H1 (cell line): ENCODE measurements at regions of chr2 and their contacts with region 1.

Region 1: DNA sequence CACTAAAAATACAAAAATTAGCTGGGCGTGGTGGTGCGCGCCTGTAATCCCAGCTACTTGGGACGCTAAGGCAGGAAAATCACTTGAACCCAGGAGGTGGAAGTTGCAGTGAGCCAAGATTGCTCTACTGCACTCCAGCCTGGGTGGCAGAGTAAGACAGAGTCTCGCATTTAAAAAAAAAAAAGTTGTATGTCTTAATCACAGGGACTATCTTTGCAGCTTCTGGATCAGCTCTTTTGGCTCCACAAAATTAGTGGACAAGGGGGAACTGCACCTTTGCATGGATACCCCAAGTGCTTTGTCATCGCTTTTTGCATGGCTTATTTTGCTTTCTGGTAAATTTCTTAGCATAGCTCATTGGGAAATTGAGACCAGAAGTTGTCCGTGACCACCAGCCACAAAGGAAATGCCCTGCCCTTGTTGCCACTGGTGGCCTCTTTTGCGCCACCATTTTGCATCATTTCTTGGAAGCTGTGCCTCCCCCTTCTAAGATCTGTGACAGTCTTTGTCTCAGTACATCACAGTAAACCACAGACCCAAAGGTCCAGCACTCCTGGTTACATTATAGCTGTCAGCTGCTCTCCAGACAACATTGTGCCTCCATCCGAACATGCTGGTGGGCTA is 43.9 kb upstream of the PCBP1 start:
- DNase-seq: no peak
- H3K4me3 ChIP-seq: no peak overlapping the region
- H3K27ac ChIP-seq: no peak overlapping the region
- H3K4me1 ChIP-seq: no peaks in the 10 kb centered on the region
- H3K27me3 ChIP-seq: no peaks in the 10 kb centered on the region
- CTCF ChIP-seq: no peak
- EP300 ChIP-seq: no peak
- POLR2A ChIP-seq: no peak
- RAD21 ChIP-seq: no peak

Region 2: GRCh38 chr2:69807821-69808540 is 235.4 kb before region 1 on chr2:
- CTCF ChIA-PET with region 1: no interaction called
- POLR2A ChIA-PET with region 1: no interaction called
- DNase-seq: peak in 1 of 2 experiments; percentile 35
- H3K4me3 ChIP-seq: no peak overlapping the region
- H3K27ac ChIP-seq: no peak overlapping the region
- H3K4me1 ChIP-seq: no peaks in the 10 kb centered on the region
- H3K27me3 ChIP-seq: no peaks in the 10 kb centered on the region
- CTCF ChIP-seq: no peak
- EP300 ChIP-seq: no peak
- POLR2A ChIP-seq: no peak
- RAD21 ChIP-seq: no peak

Region 3: GRCh38 chr2:70029814-70030409 is 13.5 kb before region 1 on chr2:
- CTCF ChIA-PET with region 1: interaction called, 6 read pairs
- POLR2A ChIA-PET with region 1: interaction called, 21 read pairs
- DNase-seq: peak in 1 of 2 experiments; percentile 61
- H3K4me3 ChIP-seq: no peak overlapping the region
- H3K27ac ChIP-seq: peak overlapping the region; percentile 49; the same call in 1 of the 2 replicates
- H3K4me1 ChIP-seq: peaks cover 2 to 7% (median 5%) of the 10 kb centered on the region in 4 experiments; a peak in 6 of 7 replicates
- H3K27me3 ChIP-seq: no peaks in the 10 kb centered on the region
- CTCF ChIP-seq: no peak
- EP300 ChIP-seq: no peak
- POLR2A ChIP-seq: peak in 1 of 2 experiments; percentile 81; a peak in 2 of 3 replicates
- RAD21 ChIP-seq: peak in 1 of 2 experiments; percentile 8; a peak in 1 of 4 replicates

Region 4: DNA sequence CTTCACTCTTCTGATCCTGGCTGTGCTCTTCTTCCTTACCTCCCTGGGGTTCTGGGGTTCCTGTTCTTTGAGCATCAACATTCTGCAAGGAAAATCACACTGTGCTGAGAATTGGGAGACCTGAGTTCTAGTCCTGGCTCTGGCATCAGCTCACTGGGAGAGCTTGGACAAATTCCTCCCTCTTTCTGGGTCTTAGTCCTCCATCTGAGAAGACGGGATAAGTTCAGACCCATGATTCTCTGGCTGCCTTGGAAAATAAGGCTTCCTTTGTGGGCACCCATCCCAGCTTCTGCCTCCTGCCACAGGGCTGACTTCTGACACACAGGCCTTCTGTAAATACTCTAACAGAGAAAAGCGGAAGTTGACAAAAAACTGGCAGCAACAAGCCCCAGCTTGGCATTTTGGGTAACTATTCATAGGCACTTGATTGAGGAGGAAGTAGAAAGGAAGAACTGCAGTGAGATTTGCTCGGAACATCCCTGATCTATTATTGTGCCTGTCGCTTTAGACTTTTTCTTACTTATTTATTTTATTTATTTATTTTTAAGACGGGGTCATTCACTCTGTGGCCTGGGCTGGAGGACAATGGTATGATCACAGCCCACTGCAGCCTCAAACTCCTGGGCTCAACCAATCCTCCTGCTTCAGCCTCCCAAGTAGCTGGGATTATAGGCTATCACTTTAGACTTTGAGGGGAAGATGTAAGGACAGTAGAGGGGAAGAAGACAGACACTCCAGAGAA is 51.8 kb after region 1 on chr2:
- CTCF ChIA-PET with region 1: no interaction called
- POLR2A ChIA-PET with region 1: no interaction called
- DNase-seq: no peak
- H3K4me3 ChIP-seq: no peak overlapping the region
- H3K27ac ChIP-seq: no peak overlapping the region
- H3K4me1 ChIP-seq: peaks cover 0 to 3% (median under 1%) of the 10 kb centered on the region in 4 experiments; a peak in 3 of 7 replicates
- H3K27me3 ChIP-seq: no peaks in the 10 kb centered on the region
- CTCF ChIP-seq: no peak
- EP300 ChIP-seq: no peak
- POLR2A ChIP-seq: no peak
- RAD21 ChIP-seq: no peak